ENCODE measurements at regions of chr7 and their contacts with region 1.

Region 1: GRCh38 chr7:151351027-151351426 is 9.4 kb downstream of the NUB1 start:
- DNase-seq: peak in 4 of 9 experiments; percentile 29 to 59 (median 46)
- ATAC-seq: no peak
- H3K4me3 ChIP-seq: no peak overlapping the region
- H3K4me3 Mint-ChIP-seq: peak overlapping the region; percentile 22
- H3K27ac ChIP-seq: peak overlapping the region; percentile 45 to 98
- H3K27ac Mint-ChIP-seq: peak overlapping the region; percentile 89
- H3K4me1 ChIP-seq: peaks cover 39% of the 10 kb centered on the region
- H3K4me1 Mint-ChIP-seq: peaks cover 57% of the 10 kb centered on the region
- H3K27me3 ChIP-seq: no peaks in the 10 kb centered on the region
- H3K27me3 Mint-ChIP-seq: no peaks in the 10 kb centered on the region
- CTCF ChIP-seq: no peak

Region 2: GRCh38 chr7:151226875-151227782 is 123.9 kb before region 1 on chr7 and contains the start of gene ABCF2:
- CTCF ChIA-PET with region 1: no interaction called
- POLR2A ChIA-PET with region 1: no interaction called
- intact Hi-C with region 1: loop called in 1 of 2 experiments (anchors 1 kb)
- DNase-seq: peak; percentile 94 to 99 (median 98)
- ATAC-seq: peak; percentile 98
- H3K4me3 ChIP-seq: peak within 1 kb of the TSS; percentile 69 to 84
- H3K4me3 Mint-ChIP-seq: peak within 1 kb of the TSS; percentile 100
- H3K27ac ChIP-seq: peak within 1 kb of the TSS; percentile 67 to 79
- H3K27ac Mint-ChIP-seq: peak within 1 kb of the TSS; percentile 97
- H3K4me1 ChIP-seq: peaks cover 27% of the 10 kb centered on the region
- H3K4me1 Mint-ChIP-seq: peaks cover 48% of the 10 kb centered on the region
- H3K27me3 ChIP-seq: no peaks in the 10 kb centered on the region
- H3K27me3 Mint-ChIP-seq: no peaks in the 10 kb centered on the region
- CTCF ChIP-seq: no peak
- total RNA-seq, gene ABCF2: 12.7 to 16.5 TPM

Region 3: GRCh38 chr7:151244196-151244840 is 106.7 kb before region 1 on chr7:
- CTCF ChIA-PET with region 1: no interaction called
- POLR2A ChIA-PET with region 1: no interaction called
- intact Hi-C with region 1: loop called in 1 of 2 experiments (anchors 5 kb)
- DNase-seq: peak in 5 of 9 experiments; percentile 44 to 79 (median 67)
- ATAC-seq: peak; percentile 30
- H3K4me3 ChIP-seq: no peak overlapping the region
- H3K4me3 Mint-ChIP-seq: peak overlapping the region; percentile 70
- H3K27ac ChIP-seq: no peak overlapping the region
- H3K27ac Mint-ChIP-seq: no peak overlapping the region
- H3K4me1 ChIP-seq: peaks cover 40% of the 10 kb centered on the region
- H3K4me1 Mint-ChIP-seq: peaks cover 41% of the 10 kb centered on the region
- H3K27me3 ChIP-seq: peaks cover 0 to 19% of the 10 kb centered on the region in 2 experiments
- H3K27me3 Mint-ChIP-seq: peaks cover 2% of the 10 kb centered on the region
- CTCF ChIP-seq: peak; percentile 72

Region 4: GRCh38 chr7:151361193-151361959 is 10.3 kb after region 1 on chr7:
- CTCF ChIA-PET with region 1: interaction called, 60 read pairs
- POLR2A ChIA-PET with region 1: interaction called, 10 read pairs
- intact Hi-C with region 1: no loop called
- DNase-seq: no peak
- ATAC-seq: no peak
- H3K4me3 ChIP-seq: no peak overlapping the region
- H3K4me3 Mint-ChIP-seq: no peak overlapping the region
- H3K27ac ChIP-seq: no peak overlapping the region
- H3K27ac Mint-ChIP-seq: no peak overlapping the region
- H3K4me1 ChIP-seq: no peaks in the 10 kb centered on the region
- H3K4me1 Mint-ChIP-seq: peaks cover 5% of the 10 kb centered on the region
- H3K27me3 ChIP-seq: no peaks in the 10 kb centered on the region
- H3K27me3 Mint-ChIP-seq: no peaks in the 10 kb centered on the region
- CTCF ChIP-seq: no peak

Region 5: DNA sequence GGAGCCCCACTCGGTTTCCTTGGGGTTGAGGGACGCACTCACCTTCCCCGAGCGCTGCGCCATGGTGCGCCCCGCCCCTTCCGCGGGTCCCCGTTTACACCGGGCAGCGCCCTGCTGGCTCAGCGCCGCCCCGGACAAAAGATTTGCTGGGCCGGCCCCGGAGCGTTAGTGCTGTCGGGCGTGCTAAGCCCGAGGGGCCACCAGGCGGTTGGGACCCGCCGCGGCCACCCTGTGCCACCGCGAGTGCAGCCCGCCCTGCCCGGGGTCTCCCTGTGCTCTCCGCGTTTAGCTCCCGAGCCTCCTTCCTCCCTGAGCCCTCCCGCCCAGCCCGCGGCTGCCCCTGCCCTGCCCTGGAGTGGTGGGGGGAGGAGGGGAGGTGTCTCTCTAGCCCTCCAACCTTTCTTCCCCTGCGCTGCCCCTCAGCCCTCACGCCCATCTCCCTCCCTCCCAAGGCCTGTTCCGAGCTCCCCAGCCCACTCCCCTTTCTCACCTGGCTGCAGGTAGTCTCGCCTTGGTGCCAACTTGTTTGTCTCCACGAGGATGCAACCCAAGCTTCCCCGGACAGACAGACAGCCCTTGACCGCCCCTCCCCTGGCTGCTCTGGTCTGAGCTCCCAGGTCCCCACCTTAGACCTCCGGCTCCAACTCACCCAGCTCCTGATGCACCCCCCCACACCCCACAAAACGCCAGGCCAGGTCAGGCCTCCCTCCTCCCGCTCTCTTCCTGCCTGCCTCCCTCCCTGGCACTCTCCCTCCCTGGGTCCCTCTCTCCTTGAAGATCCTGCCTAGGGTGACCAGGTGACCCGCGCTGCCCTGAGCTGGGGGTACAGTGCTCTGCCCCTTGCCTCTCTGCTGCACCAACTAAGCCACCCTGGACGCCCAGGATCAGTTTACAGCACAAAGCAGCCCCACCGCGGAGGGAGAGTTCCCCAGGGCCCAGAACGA is 89.1 kb after region 1 on chr7 and contains the start of gene CRYGN:
- CTCF ChIA-PET with region 1: interaction called, 4 read pairs
- POLR2A ChIA-PET with region 1: interaction called, 11 read pairs
- intact Hi-C with region 1: no loop called
- DNase-seq: peak in 3 of 9 experiments; percentile 38 to 44 (median 39)
- ATAC-seq: peak; percentile 61
- H3K4me3 ChIP-seq: peak within 1 kb of the TSS; percentile 22 to 35
- H3K4me3 Mint-ChIP-seq: peak within 1 kb of the TSS; percentile 47
- H3K27ac ChIP-seq: peak within 1 kb of the TSS in 1 of 2 experiments; percentile 44
- H3K27ac Mint-ChIP-seq: peak within 1 kb of the TSS; percentile 81
- H3K4me1 ChIP-seq: peaks cover 33% of the 10 kb centered on the region
- H3K4me1 Mint-ChIP-seq: peaks cover 39% of the 10 kb centered on the region
- H3K27me3 ChIP-seq: peaks cover 0 to 2% of the 10 kb centered on the region in 2 experiments
- H3K27me3 Mint-ChIP-seq: no peaks in the 10 kb centered on the region
- CTCF ChIP-seq: no peak
- total RNA-seq, gene CRYGN: not detected

Region 6: GRCh38 chr7:151871921-151872320 is 520.9 kb after region 1 on chr7:
- CTCF ChIA-PET with region 1: no interaction called
- POLR2A ChIA-PET with region 1: no interaction called
- intact Hi-C with region 1: loop called in 1 of 2 experiments (anchors 5 kb)
- DNase-seq: no peak
- ATAC-seq: no peak
- H3K4me3 ChIP-seq: no peak overlapping the region
- H3K4me3 Mint-ChIP-seq: no peak overlapping the region
- H3K27ac ChIP-seq: no peak overlapping the region
- H3K27ac Mint-ChIP-seq: no peak overlapping the region
- H3K4me1 ChIP-seq: peaks cover 12% of the 10 kb centered on the region
- H3K4me1 Mint-ChIP-seq: peaks cover 52% of the 10 kb centered on the region
- H3K27me3 ChIP-seq: no peaks in the 10 kb centered on the region
- H3K27me3 Mint-ChIP-seq: no peaks in the 10 kb centered on the region
- CTCF ChIP-seq: no peak

Measured in CD8-positive, alpha-beta T cell (primary cell).